ENCODE measurements at regions of chr12 and their contacts with region 1.

Region 1: DNA sequence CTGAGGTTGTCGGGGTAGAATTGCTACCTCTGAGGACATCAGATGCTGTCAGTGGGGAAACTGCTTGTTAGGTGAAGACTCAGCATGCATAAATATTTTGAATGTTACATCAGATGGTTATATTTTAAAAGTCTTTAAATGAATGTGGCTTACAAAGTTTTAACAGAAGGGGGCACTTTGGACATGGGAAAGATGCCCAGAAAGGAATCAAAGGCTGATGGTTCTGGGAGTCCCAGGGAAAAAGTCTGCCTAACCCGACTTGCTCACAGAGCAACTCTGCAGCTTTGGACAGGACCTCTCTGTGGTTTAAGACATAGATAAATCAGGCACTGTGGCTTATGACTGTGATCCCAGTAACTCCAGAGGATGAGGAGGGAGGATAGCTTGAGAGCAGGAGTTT is 474.9 kb downstream of the ATP23 start:
- DNase-seq: peak; percentile 88
- ATAC-seq: peak; percentile 73
- H3K4me3 ChIP-seq: no peak overlapping the region
- H3K27ac ChIP-seq: peak overlapping the region; percentile 60
- H3K4me1 ChIP-seq: peaks cover 12% of the 10 kb centered on the region
- H3K27me3 ChIP-seq: no peaks in the 10 kb centered on the region
- CTCF ChIP-seq: peak; percentile 61
- POLR2A ChIP-seq: no peak
- RAD21 ChIP-seq: peak; percentile 70

Region 2: GRCh38 chr12:57993025-57993424 is 423.2 kb before region 1 on chr12:
- CTCF ChIA-PET with region 1: no interaction called
- POLR2A ChIA-PET with region 1: no interaction called
- dilution Hi-C with region 1: no loop called
- in situ Hi-C with region 1: no loop called
- intact Hi-C with region 1: loop called (anchors 5 kb)
- DNase-seq: peak; percentile 28
- ATAC-seq: peak; percentile 88
- H3K4me3 ChIP-seq: no peak overlapping the region
- H3K27ac ChIP-seq: no peak overlapping the region
- H3K4me1 ChIP-seq: no peaks in the 10 kb centered on the region
- H3K27me3 ChIP-seq: no peaks in the 10 kb centered on the region; the same call in 1 of the 2 replicates
- CTCF ChIP-seq: peak; percentile 49
- POLR2A ChIP-seq: no peak
- RAD21 ChIP-seq: peak; percentile 45; the same call in 1 of the 2 replicates

Region 3: DNA sequence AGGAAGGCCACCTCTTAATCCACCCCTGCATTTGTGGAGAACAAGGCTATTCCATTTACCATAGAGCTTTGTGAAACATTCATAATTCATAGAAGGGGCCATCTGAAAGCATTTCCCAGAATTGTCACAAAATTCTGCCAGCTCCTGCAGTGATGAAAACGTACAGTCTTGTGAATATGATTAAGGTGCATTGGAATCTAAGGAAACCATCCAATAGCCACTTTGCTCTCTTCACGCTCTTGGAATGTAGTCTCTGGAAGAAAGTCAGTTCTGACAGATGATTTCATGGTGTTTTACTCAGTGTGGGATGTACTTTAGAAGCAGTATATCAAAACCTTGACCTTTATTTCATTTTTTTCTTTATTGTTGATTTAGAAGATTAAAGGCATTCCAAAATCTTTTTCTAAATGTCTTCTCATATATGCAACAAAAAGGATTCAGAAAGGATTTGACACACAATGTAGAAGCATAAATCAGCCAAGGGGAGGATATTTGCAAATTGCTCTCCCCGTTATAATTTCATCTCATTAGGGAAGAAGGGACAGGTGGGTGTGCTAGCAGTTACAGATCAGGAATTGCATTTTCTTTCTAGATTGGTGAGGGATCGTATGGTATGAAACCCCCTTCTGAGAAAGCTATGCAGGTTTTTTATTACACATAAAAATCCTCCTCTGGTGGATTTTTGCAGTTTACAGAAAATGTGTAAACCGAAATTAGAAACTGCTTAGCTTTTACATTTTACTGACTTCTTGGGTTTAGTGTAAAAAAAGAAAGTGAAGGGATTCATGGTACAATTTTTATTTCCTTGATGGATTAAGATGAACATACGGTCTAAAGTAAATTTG is 113.9 kb after region 1 on chr12:
- CTCF ChIA-PET with region 1: no interaction called
- POLR2A ChIA-PET with region 1: no interaction called
- dilution Hi-C with region 1: no loop called
- in situ Hi-C with region 1: no loop called
- intact Hi-C with region 1: loop called (anchors 2 kb)
- DNase-seq: peak; percentile 97
- ATAC-seq: peak; percentile 74
- H3K4me3 ChIP-seq: no peak overlapping the region
- H3K27ac ChIP-seq: peak overlapping the region; percentile 97
- H3K4me1 ChIP-seq: peaks cover 7% of the 10 kb centered on the region
- H3K27me3 ChIP-seq: no peaks in the 10 kb centered on the region
- CTCF ChIP-seq: no peak
- POLR2A ChIP-seq: no peak
- RAD21 ChIP-seq: no peak

Region 4: GRCh38 chr12:58888131-58888783 is 472.0 kb after region 1 on chr12:
- CTCF ChIA-PET with region 1: no interaction called
- POLR2A ChIA-PET with region 1: no interaction called
- dilution Hi-C with region 1: no loop called
- in situ Hi-C with region 1: no loop called
- intact Hi-C with region 1: loop called (anchors 10 kb)
- DNase-seq: peak; percentile 63
- ATAC-seq: peak; percentile 48
- H3K4me3 ChIP-seq: no peak overlapping the region
- H3K27ac ChIP-seq: no peak overlapping the region
- H3K4me1 ChIP-seq: peaks cover 2% of the 10 kb centered on the region; the same call in 1 of the 2 replicates
- H3K27me3 ChIP-seq: no peaks in the 10 kb centered on the region
- CTCF ChIP-seq: no peak
- POLR2A ChIP-seq: no peak
- RAD21 ChIP-seq: no peak

Region 5: GRCh38 chr12:59087077-59087673 is 670.9 kb after region 1 on chr12:
- CTCF ChIA-PET with region 1: no interaction called
- POLR2A ChIA-PET with region 1: no interaction called
- dilution Hi-C with region 1: no loop called
- in situ Hi-C with region 1: no loop called
- intact Hi-C with region 1: loop called (anchors 5 kb)
- DNase-seq: peak; percentile 39
- ATAC-seq: peak; percentile 69
- H3K4me3 ChIP-seq: no peak overlapping the region
- H3K27ac ChIP-seq: no peak overlapping the region
- H3K4me1 ChIP-seq: peaks cover 13% of the 10 kb centered on the region
- H3K27me3 ChIP-seq: no peaks in the 10 kb centered on the region
- CTCF ChIP-seq: peak; percentile 81
- POLR2A ChIP-seq: no peak
- RAD21 ChIP-seq: peak; percentile 74

Measured in IMR-90 (cell line).